GM10248 (cell line): ENCODE measurements at regions of chr10 and their contacts with region 1.

Region 1: DNA sequence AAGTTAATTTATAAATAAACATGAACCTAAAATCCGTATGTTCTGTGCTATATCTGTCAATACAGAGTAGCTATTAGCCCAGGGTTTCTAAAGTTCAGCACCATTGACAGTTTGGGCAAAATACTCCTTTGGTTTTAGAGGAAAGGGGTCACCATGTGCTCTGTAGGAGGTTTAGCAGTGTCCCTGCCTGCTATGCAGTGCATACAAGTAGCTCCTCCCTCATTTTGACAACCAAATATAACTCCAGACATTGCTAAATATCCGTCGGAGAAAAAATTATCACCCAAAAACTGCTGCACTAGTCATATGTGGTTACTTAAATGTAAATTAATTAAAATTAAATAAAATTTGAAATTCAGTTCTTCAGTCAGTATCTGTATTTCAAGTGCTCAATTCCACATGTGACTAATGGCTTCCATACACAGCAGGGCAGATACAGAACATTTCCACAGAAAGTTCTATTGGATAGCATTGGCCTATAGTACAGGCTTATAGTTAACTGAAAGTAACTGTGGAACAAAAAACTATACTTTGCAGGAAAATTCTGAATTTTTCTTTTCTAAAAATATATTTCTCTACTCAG is 6.4 kb downstream of the UPF2 start:
- DNase-seq: no peak
- CTCF ChIP-seq: no peak

Region 2: GRCh38 chr10:11934262-11934661 is 101.9 kb before region 1 on chr10:
- CTCF ChIA-PET with region 1: no interaction called
- POLR2A ChIA-PET with region 1: no interaction called
- DNase-seq: no peak
- CTCF ChIP-seq: no peak

Region 3: GRCh38 chr10:12025591-12025990 is 10.6 kb before region 1 on chr10:
- CTCF ChIA-PET with region 1: interaction called, 17 read pairs
- POLR2A ChIA-PET with region 1: interaction called, 4 read pairs
- DNase-seq: no peak
- CTCF ChIP-seq: no peak

Region 4: DNA sequence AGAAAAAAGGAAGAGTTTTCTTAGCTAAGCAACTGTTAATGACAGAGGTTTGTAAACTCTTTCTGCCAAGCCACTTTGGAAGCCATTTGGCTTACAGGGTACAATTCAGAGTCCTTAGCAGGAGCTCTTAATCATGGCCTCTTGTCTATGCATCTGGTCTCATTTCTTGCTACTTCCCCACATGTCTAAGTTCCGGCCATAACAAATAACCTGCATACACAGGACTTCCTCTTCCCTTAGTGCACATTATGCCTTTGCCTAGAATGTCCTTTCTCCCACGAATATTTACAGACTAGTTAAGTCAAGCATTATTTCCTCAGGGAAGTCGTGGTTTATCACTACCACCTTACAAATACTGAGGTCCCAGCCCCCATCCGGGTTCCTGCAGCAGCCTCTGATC is 15.1 kb after region 1 on chr10:
- CTCF ChIA-PET with region 1: no interaction called
- POLR2A ChIA-PET with region 1: no interaction called
- DNase-seq: no peak
- CTCF ChIP-seq: no peak

Region 5: DNA sequence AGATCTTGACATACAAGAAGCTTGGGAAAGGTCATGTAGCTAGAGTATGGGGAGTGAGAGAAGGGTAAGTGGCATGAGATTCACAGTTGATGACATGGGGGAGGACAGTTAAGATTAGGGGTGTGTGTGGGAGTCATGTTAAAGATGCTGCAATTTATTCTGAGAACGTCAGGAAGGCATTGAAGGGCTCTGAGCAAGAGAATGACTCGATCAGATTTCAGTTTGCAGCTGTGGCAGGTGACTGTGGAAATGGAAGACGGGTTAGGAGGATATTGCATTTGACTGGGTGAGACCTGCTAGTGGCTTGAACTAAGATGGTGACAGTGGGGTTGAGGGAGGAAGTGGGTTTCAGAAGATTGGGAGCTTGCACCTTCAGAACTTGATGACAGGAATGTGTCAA is 165.4 kb after region 1 on chr10:
- CTCF ChIA-PET with region 1: no interaction called
- POLR2A ChIA-PET with region 1: no interaction called
- DNase-seq: no peak
- CTCF ChIP-seq: no peak